Activated CD8-positive, alpha-beta T cell treated with anti-CD3 and anti-CD28 coated beads, Interleukin-2, amount 10 ng/mL, durations not matched to agents 7 days and 5 days (primary cell): ENCODE measurements at regions of chr5 and their contacts with region 1.

Region 1: GRCh38 chr5:36739751-36740221 is 133.4 kb downstream of the SLC1A3 start:
- DNase-seq: peak; percentile 78
- ATAC-seq: peak; percentile 63
- H3K4me3 Mint-ChIP-seq: no peak overlapping the region
- H3K27ac Mint-ChIP-seq: no peak overlapping the region
- H3K4me1 Mint-ChIP-seq: peaks cover 5% of the 10 kb centered on the region
- H3K27me3 Mint-ChIP-seq: peaks cover 25% of the 10 kb centered on the region

Region 2: DNA sequence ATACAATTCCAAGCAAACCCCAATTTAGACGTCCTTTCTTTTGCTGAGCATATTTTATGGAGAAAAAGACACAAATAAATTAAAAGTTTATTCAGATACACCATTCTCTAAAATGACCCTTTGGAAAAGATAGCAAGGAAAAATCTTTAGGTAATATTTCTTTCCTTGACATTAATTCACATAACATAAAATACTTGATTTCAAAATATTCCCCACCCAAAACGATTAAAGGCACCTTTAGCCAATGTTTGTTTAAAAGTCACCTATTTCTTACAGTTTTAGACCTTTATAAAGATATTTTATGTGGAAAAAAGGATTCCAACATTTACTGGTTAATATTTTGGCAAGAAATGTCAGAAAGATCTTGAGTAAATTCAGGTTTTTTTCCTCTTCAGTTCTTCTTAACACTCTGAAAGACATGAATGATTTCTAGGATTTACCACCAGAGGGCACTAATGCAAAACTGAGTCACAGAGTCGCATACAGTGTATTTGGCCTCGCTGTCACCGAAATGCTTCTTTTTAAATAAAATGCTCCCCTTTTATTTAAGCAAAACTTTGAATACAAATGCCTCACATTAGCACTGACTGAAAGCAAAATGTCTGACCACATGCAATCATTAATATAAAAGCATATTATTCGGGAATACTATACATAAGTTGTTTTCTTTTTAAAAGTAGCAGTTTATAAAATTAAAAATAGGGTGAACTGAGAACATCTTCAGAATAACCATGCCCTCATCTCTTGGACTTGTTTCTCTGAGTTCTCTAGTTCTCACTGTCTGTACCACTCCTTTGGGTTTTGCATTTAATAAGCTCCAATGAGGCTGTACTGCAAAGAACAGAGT is 10.9 kb before region 1 on chr5:
- CTCF ChIA-PET with region 1: interaction called, 27 read pairs
- POLR2A ChIA-PET with region 1: no interaction called
- DNase-seq: peak; percentile 44
- ATAC-seq: no peak
- H3K4me3 Mint-ChIP-seq: no peak overlapping the region
- H3K27ac Mint-ChIP-seq: no peak overlapping the region
- H3K4me1 Mint-ChIP-seq: peaks cover 16% of the 10 kb centered on the region
- H3K27me3 Mint-ChIP-seq: peaks cover 2% of the 10 kb centered on the region

Region 3: DNA sequence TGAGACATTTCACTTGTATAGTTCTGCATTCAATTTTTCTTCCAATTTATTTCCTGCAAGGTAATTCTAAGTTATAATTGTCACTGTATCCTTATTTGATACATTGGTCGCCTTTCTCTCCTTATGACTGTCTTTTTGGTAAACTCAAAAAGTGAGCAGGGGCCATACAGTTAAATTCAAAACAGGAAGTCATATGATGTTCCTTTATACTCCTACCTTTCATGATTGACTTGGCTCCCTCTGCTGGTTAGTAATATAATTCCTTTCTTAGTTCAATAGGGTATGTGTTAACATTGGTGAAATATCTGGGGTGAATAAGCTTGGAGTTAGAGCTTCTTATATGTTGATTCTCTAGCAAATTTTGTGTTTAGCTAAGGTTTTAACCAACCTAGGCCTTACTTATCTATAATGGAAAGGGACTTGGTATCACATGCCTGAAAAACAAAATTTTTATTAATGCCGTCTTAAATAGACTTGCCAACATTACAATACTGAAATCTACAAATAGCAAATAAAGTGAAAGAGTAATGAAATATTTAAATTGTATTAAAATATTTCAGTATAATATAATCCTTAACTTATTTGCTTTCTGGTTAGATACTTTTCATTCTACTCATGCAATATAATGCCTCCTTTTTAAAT is 130.7 kb after region 1 on chr5:
- CTCF ChIA-PET with region 1: interaction called, 24 read pairs
- POLR2A ChIA-PET with region 1: no interaction called
- DNase-seq: no peak
- ATAC-seq: peak; percentile 84
- H3K4me3 Mint-ChIP-seq: no peak overlapping the region
- H3K27ac Mint-ChIP-seq: no peak overlapping the region
- H3K4me1 Mint-ChIP-seq: peaks cover 26% of the 10 kb centered on the region
- H3K27me3 Mint-ChIP-seq: no peaks in the 10 kb centered on the region

Region 4: GRCh38 chr5:37005946-37006540 is 266.3 kb after region 1 on chr5:
- CTCF ChIA-PET with region 1: interaction called, 15 read pairs
- POLR2A ChIA-PET with region 1: no interaction called
- DNase-seq: no peak
- ATAC-seq: no peak
- H3K4me3 Mint-ChIP-seq: no peak overlapping the region
- H3K27ac Mint-ChIP-seq: no peak overlapping the region
- H3K4me1 Mint-ChIP-seq: no peaks in the 10 kb centered on the region
- H3K27me3 Mint-ChIP-seq: no peaks in the 10 kb centered on the region